ENCODE measurements at regions of chr2 and their contacts with region 1.

Region 1: DNA sequence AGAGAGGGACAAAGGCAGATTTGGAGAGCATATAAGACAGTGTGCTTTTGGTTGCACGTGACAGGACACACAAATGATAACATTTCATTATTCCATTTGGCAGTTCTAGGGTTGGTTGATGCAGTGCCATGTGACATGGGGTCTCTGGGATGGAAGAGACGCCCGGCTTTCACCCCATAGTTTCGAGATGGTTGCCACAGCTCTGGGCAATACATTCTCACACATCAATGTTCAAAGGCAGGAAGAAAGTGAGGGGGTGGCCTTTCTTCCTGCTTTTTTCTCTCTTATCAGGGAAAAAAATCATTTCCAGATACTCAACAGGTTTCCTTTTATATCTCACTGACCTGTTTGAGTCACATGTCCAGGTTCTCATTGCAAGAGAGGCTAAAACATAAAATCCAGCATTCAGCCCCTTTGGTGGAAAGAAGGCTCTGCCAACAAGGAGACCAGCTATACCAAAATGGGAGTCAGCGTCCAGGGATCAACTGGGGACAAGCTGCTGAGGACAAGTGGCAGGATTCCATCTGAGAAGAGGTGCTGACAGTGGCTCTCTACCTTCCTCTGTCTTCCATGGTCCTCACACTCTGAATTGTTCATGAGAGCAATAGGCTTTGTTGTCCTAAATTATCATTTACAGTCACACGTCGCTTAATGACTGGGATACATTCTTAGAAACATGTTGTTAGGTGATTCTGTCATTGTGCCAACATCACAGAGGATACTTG is 29.1 kb upstream of the ANKRD44 start:
- DNase-seq: no peak
- ATAC-seq: no peak; the same call in 2 of the 3 replicates
- H3K4me3 ChIP-seq: no peak overlapping the region
- H3K27ac ChIP-seq: no peak overlapping the region
- H3K4me1 ChIP-seq: no peaks in the 10 kb centered on the region
- H3K27me3 ChIP-seq: peaks cover 2 to 5% of the 10 kb centered on the region in 2 experiments; a peak in 1 of 5 replicates
- CTCF ChIP-seq: no peak
- EP300 ChIP-seq: no peak
- POLR2A ChIP-seq: no peak
- RAD21 ChIP-seq: no peak

Region 2: GRCh38 chr2:196441527-196441926 is 898.1 kb before region 1 on chr2:
- CTCF ChIA-PET with region 1: no interaction called
- POLR2A ChIA-PET with region 1: no interaction called
- in situ Hi-C with region 1: no loop called
- intact Hi-C with region 1: loop called (anchors 5 kb)
- DNase-seq: no peak
- ATAC-seq: no peak
- H3K4me3 ChIP-seq: no peak overlapping the region
- H3K27ac ChIP-seq: no peak overlapping the region
- H3K4me1 ChIP-seq: no peaks in the 10 kb centered on the region
- H3K27me3 ChIP-seq: peaks cover 0 to 8% of the 10 kb centered on the region in 2 experiments; a peak in 1 of 5 replicates
- CTCF ChIP-seq: no peak
- EP300 ChIP-seq: no peak
- POLR2A ChIP-seq: no peak
- RAD21 ChIP-seq: no peak

Region 3: GRCh38 chr2:197356136-197356535 is 16.5 kb after region 1 on chr2:
- CTCF ChIA-PET with region 1: no interaction called
- POLR2A ChIA-PET with region 1: no interaction called
- in situ Hi-C with region 1: no loop called
- intact Hi-C with region 1: no loop called
- DNase-seq: no peak
- ATAC-seq: peak; percentile 71
- H3K4me3 ChIP-seq: no peak overlapping the region
- H3K27ac ChIP-seq: no peak overlapping the region
- H3K4me1 ChIP-seq: no peaks in the 10 kb centered on the region
- H3K27me3 ChIP-seq: peaks cover 0 to 7% of the 10 kb centered on the region in 2 experiments; a peak in 2 of 5 replicates
- CTCF ChIP-seq: no peak
- EP300 ChIP-seq: no peak
- POLR2A ChIP-seq: no peak
- RAD21 ChIP-seq: no peak